A673 (cell line): ENCODE measurements at regions of chr6 and their contacts with region 1.

Region 1: GRCh38 chr6:22411376-22412105 is 114.7 kb upstream of the PRL start:
- DNase-seq: no peak
- H3K4me3 ChIP-seq: no peak overlapping the region
- H3K27ac ChIP-seq: no peak overlapping the region
- H3K4me1 ChIP-seq: peaks cover 21% of the 10 kb centered on the region
- H3K27me3 ChIP-seq: no peaks in the 10 kb centered on the region
- CTCF ChIP-seq: no peak

Region 2: GRCh38 chr6:21305893-21306332 is 1105.6 kb before region 1 on chr6:
- CTCF ChIA-PET with region 1: no interaction called
- POLR2A ChIA-PET with region 1: no interaction called
- intact Hi-C with region 1: no loop called
- DNase-seq: peak; percentile 62
- H3K4me3 ChIP-seq: no peak overlapping the region
- H3K27ac ChIP-seq: no peak overlapping the region
- H3K4me1 ChIP-seq: peaks cover 9% of the 10 kb centered on the region
- H3K27me3 ChIP-seq: no peaks in the 10 kb centered on the region
- CTCF ChIP-seq: peak; percentile 41; the same call in 1 of the 2 replicates

Region 3: GRCh38 chr6:21971541-21971940 is 440.0 kb before region 1 on chr6:
- CTCF ChIA-PET with region 1: no interaction called
- POLR2A ChIA-PET with region 1: no interaction called
- intact Hi-C with region 1: loop called (anchors 10 kb)
- DNase-seq: peak; percentile 59
- H3K4me3 ChIP-seq: no peak overlapping the region
- H3K27ac ChIP-seq: peak overlapping the region; percentile 29
- H3K4me1 ChIP-seq: peaks cover 51% of the 10 kb centered on the region
- H3K27me3 ChIP-seq: no peaks in the 10 kb centered on the region
- CTCF ChIP-seq: no peak

Region 4: GRCh38 chr6:22236626-22237414 is 174.7 kb before region 1 on chr6:
- CTCF ChIA-PET with region 1: no interaction called
- POLR2A ChIA-PET with region 1: no interaction called
- intact Hi-C with region 1: no loop called
- DNase-seq: no peak
- H3K4me3 ChIP-seq: no peak overlapping the region
- H3K27ac ChIP-seq: no peak overlapping the region
- H3K4me1 ChIP-seq: no peaks in the 10 kb centered on the region
- H3K27me3 ChIP-seq: no peaks in the 10 kb centered on the region
- CTCF ChIP-seq: no peak